ENCODE measurements at regions of chr3 and their contacts with region 1.

Region 1: DNA sequence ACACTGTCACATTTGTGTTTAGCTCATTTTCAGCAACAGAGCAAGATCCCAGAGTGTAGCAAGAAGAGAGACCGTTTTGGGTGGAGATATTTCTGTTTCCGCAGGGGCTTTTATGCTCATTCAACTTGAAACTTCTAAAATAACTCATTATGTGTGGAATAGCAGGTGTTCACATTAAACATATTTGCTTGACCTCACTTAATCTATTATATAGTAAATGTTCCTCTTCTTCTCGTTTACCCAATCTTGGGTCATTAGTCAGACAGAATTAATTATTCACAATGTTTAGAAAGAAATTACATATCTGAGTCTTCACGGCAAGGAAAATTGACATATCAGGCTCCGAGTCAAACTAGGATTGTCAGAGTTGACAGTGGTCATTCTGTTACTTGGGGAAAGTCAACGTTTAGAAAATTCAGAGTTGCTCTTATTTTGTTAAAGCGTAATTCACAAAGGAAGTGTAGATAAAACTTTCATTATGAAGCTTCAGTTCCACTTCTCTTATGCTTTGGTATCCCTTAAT is 222.9 kb downstream of the TPRG1 start:
- DNase-seq: no peak
- H3K4me3 Mint-ChIP-seq: no peak overlapping the region
- H3K27ac Mint-ChIP-seq: no peak overlapping the region
- H3K4me1 Mint-ChIP-seq: peaks cover 32% of the 10 kb centered on the region
- H3K27me3 Mint-ChIP-seq: no peaks in the 10 kb centered on the region
- CTCF ChIP-seq: no peak

Region 2: DNA sequence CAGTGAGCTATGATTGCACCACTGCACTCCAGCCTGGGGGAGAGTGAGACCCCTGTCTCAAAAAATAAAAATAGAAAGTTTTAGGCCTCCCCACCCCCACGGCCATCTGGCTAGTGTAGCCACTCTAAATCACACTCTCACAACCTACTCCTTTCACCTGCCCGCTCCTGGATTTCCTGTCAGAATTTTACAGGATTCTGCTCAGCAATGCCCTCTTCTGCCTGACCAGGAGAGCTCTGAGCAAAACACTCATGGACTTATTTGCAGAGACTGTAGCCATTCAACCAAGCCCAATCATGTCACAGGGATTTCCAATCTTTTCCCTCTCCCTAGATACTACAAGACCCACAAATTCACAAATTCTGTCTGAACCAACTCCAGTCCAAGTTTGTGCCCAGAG is 465.5 kb before region 1 on chr3:
- CTCF ChIA-PET with region 1: no interaction called
- POLR2A ChIA-PET with region 1: no interaction called
- intact Hi-C with region 1: no loop called
- DNase-seq: peak; percentile 58
- H3K4me3 Mint-ChIP-seq: no peak overlapping the region
- H3K27ac Mint-ChIP-seq: peak overlapping the region; percentile 4
- H3K4me1 Mint-ChIP-seq: peaks cover 6% of the 10 kb centered on the region
- H3K27me3 Mint-ChIP-seq: no peaks in the 10 kb centered on the region
- CTCF ChIP-seq: peak; percentile 15

Region 3: GRCh38 chr3:189304446-189305351 is 90.0 kb before region 1 on chr3:
- CTCF ChIA-PET with region 1: interaction called, 4 read pairs
- POLR2A ChIA-PET with region 1: interaction called, 100 read pairs
- intact Hi-C with region 1: no loop called
- DNase-seq: peak; percentile 96
- H3K4me3 Mint-ChIP-seq: peak overlapping the region; percentile 65
- H3K27ac Mint-ChIP-seq: peak overlapping the region; percentile 99
- H3K4me1 Mint-ChIP-seq: peaks cover 59% of the 10 kb centered on the region
- H3K27me3 Mint-ChIP-seq: no peaks in the 10 kb centered on the region
- CTCF ChIP-seq: no peak

Region 4: GRCh38 chr3:189404797-189405484 is 10.3 kb after region 1 on chr3:
- CTCF ChIA-PET with region 1: interaction called, 3 read pairs
- POLR2A ChIA-PET with region 1: interaction called, 14 read pairs
- intact Hi-C with region 1: no loop called
- DNase-seq: no peak
- H3K4me3 Mint-ChIP-seq: no peak overlapping the region
- H3K27ac Mint-ChIP-seq: no peak overlapping the region
- H3K4me1 Mint-ChIP-seq: no peaks in the 10 kb centered on the region
- H3K27me3 Mint-ChIP-seq: no peaks in the 10 kb centered on the region
- CTCF ChIP-seq: no peak

Region 5: DNA sequence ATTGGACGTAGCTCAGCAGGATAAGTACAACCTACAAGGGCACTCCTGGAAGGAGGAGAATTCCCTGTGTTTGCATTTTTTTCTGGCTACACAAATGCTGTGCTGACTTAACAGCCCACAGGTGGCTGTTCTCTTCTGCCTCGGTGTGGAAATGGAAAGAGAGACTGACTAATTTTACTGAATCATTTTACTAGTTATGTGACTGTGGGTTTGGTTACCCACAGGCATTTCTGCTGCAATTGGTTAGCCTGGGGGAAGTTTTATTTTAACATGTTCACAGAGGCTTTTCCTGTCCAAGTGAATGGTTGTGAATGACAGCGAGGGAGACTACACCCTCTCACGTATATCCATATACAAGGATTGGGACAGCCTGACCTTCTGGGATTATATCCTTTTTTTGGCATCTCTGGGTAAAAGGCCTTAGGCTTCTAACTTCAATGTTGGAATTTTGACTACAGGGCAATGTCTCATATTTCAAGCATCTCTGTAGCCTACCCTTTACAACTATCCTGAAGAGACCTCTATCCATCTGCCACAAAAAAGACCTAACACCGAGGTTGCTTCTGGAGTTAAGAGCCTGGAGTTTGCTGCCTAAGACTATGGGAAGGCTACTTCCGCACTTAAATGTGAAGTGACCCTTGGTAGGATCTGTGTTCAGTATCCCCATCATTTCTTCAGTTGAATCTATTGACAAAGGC is 169.4 kb after region 1 on chr3:
- CTCF ChIA-PET with region 1: interaction called, 3 read pairs
- POLR2A ChIA-PET with region 1: interaction called, 26 read pairs
- intact Hi-C with region 1: loop called (anchors 1 kb)
- DNase-seq: peak; percentile 92
- H3K4me3 Mint-ChIP-seq: no peak overlapping the region
- H3K27ac Mint-ChIP-seq: peak overlapping the region; percentile 69
- H3K4me1 Mint-ChIP-seq: peaks cover 26% of the 10 kb centered on the region
- H3K27me3 Mint-ChIP-seq: no peaks in the 10 kb centered on the region
- CTCF ChIP-seq: no peak

Region 6: DNA sequence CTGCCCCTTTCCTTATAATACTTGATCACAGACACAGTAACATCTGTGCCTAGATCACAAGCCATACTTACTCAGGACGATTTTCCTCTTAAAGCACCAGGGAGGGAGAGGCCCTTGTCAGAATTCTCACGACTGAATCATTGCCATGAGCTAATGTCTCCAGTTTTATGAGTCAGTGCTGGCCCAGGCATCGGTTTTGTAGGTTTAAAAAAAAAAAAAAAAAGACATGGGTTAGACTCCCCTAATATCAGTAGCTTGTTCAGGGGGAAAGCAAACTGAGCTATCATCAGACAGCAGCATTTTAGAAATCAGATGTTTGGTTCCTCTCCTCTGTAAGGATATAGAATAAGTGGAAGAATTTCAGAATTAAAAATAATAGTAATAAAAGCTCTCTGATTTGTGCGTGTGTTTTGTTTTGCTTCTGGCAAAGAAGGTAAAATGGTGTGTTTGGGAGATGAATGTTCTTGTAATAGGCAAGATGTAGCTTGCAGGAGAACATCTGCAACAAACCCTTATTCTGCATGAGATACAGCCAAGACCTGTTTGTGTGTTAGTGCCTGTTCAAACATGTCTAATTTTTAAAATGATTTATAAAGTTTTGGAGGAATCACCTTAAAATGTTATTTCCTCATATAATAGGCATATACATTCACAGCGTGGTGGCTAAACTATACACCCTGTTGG is 430.1 kb after region 1 on chr3:
- CTCF ChIA-PET with region 1: no interaction called
- POLR2A ChIA-PET with region 1: interaction called, 11 read pairs
- intact Hi-C with region 1: no loop called
- DNase-seq: peak; percentile 96
- H3K4me3 Mint-ChIP-seq: peak overlapping the region; percentile 42
- H3K27ac Mint-ChIP-seq: peak overlapping the region; percentile 83
- H3K4me1 Mint-ChIP-seq: peaks cover 31% of the 10 kb centered on the region
- H3K27me3 Mint-ChIP-seq: no peaks in the 10 kb centered on the region
- CTCF ChIP-seq: no peak

Region 7: GRCh38 chr3:189947948-189948723 is 553.5 kb after region 1 on chr3:
- CTCF ChIA-PET with region 1: no interaction called
- POLR2A ChIA-PET with region 1: interaction called, 3 read pairs
- intact Hi-C with region 1: loop called (anchors 1 kb)
- DNase-seq: peak; percentile 73
- H3K4me3 Mint-ChIP-seq: no peak overlapping the region
- H3K27ac Mint-ChIP-seq: peak overlapping the region; percentile 74
- H3K4me1 Mint-ChIP-seq: peaks cover 26% of the 10 kb centered on the region
- H3K27me3 Mint-ChIP-seq: no peaks in the 10 kb centered on the region
- CTCF ChIP-seq: peak; percentile 76